GM10248 (cell line): ENCODE measurements at regions of chr15 and their contacts with region 1.

Region 1: GRCh38 chr15:52496776-52497470 is 31.8 kb downstream of the MYO5A start:
- DNase-seq: no peak
- CTCF ChIP-seq: no peak

Region 2: GRCh38 chr15:52466134-52466701 is 30.7 kb before region 1 on chr15:
- CTCF ChIA-PET with region 1: interaction called, 12 read pairs
- POLR2A ChIA-PET with region 1: no interaction called
- DNase-seq: peak; percentile 89
- CTCF ChIP-seq: peak; percentile 48